Activated CD8-positive, alpha-beta T cell treated with anti-CD3 and anti-CD28 coated beads for 36 hours (primary cell): ENCODE measurements at regions of chr2 and their contacts with region 1.

Region 1: GRCh38 chr2:39124000-39124745 is 3.3 kb upstream of the SOS1 start:
- DNase-seq: peak; percentile 98
- ATAC-seq: peak; percentile 72
- H3K4me3 Mint-ChIP-seq: peak overlapping the region; percentile 91
- H3K27ac Mint-ChIP-seq: peak overlapping the region; percentile 94
- H3K4me1 Mint-ChIP-seq: peaks cover 45% of the 10 kb centered on the region
- H3K27me3 Mint-ChIP-seq: no peaks in the 10 kb centered on the region
- CTCF ChIP-seq: peak; percentile 59

Region 2: DNA sequence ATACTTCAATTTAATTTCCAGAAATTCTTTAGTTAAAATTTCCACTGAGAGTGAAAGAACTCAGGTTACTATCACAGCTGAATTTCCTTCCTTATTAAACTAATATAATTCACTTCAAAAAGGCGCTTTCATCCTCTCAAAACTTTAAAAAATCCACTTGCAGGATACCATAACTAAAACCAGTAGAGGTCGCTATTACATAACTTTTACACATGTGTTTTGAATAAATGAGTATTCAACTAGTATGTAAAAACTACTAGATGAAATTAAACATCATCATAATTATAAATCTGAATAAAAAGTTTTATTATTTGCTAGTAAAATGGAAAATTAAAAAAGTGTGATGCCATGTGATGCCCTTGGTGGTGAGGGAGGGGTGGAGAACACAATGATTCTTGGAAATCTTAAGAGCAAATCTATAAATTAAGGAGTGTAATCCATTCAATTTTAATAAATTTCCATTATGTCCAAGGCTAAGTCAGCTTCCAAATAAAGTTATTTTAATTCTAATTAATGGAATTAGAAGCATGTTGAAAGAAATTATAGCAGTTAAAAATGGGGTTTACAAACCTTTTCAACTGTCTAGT is 64.7 kb before region 1 on chr2:
- CTCF ChIA-PET with region 1: interaction called, 38 read pairs
- POLR2A ChIA-PET with region 1: interaction called, 3 read pairs
- intact Hi-C with region 1: loop called (anchors 5 kb)
- DNase-seq: no peak
- ATAC-seq: no peak
- H3K4me3 Mint-ChIP-seq: no peak overlapping the region
- H3K27ac Mint-ChIP-seq: no peak overlapping the region
- H3K4me1 Mint-ChIP-seq: peaks cover 12% of the 10 kb centered on the region
- H3K27me3 Mint-ChIP-seq: no peaks in the 10 kb centered on the region
- CTCF ChIP-seq: peak; percentile 82

Region 3: DNA sequence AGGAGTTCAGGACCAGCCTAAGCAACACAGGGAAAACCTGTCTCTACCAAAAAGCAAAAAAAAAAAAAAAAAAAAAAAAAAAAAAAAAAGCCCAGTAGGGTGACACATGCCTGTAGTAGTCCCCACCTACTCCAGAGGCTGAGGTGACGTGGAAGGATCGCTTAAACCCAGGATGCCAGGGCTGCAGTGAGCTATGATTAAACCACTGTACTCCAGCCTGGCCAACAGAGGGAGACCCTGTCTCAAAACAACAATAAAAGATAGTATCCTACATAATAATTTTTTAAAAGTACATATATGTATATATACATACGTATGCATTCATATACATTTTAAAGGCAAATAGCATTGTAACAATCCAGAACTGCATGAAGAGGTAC is 55.0 kb before region 1 on chr2:
- CTCF ChIA-PET with region 1: interaction called, 3 read pairs
- POLR2A ChIA-PET with region 1: no interaction called
- intact Hi-C with region 1: loop called (anchors 5 kb)
- DNase-seq: peak; percentile 33
- ATAC-seq: peak; percentile 75
- H3K4me3 Mint-ChIP-seq: no peak overlapping the region
- H3K27ac Mint-ChIP-seq: no peak overlapping the region
- H3K4me1 Mint-ChIP-seq: peaks cover 39% of the 10 kb centered on the region
- H3K27me3 Mint-ChIP-seq: no peaks in the 10 kb centered on the region
- CTCF ChIP-seq: no peak

Region 4: DNA sequence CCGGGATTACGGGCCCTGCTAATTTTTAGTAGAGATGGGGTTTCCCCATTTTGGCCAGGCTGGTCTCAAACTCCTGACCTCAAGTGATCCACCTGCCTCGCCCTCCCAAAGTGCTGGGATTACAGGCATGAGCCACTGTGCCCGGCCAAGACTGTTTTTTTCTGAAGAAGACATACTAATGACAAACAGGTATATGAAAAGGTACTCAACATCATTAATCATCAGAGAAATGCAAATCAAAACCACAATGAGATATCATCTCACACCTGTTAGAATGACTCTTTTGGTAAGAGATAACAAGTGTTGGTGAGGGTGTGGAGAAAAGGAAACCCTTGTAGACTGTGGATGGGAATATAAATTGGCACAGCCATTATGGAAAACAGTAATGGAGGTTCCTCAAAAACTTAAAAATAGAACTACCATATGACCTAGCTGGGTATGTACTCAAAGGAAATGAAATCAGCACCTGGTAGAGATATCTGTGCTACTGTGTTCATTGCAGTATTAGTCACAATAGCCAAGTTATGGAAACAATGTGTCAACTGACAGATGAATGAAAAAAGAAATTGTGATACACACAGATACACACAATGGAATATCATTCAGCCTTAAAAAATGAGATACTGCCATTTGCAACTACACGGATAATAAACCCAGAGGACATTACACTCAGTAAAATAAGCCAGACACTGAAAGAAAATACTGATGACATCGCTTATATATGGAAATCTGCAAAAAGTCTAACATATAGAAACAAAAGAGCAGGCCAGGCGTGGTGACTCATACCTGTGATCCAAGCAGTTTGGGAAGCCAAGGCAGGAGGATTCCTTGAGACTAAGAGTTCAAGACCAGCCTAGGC is 24.1 kb before region 1 on chr2:
- CTCF ChIA-PET with region 1: interaction called, 7 read pairs
- POLR2A ChIA-PET with region 1: interaction called, 11 read pairs
- intact Hi-C with region 1: no loop called
- DNase-seq: peak; percentile 25
- ATAC-seq: peak; percentile 92
- H3K4me3 Mint-ChIP-seq: no peak overlapping the region
- H3K27ac Mint-ChIP-seq: peak overlapping the region; percentile 91
- H3K4me1 Mint-ChIP-seq: peaks cover 63% of the 10 kb centered on the region
- H3K27me3 Mint-ChIP-seq: no peaks in the 10 kb centered on the region
- CTCF ChIP-seq: no peak

Region 5: GRCh38 chr2:39107719-39108273 is 16.4 kb before region 1 on chr2:
- CTCF ChIA-PET with region 1: interaction called, 19 read pairs
- POLR2A ChIA-PET with region 1: interaction called, 11 read pairs
- intact Hi-C with region 1: no loop called
- DNase-seq: no peak
- ATAC-seq: no peak
- H3K4me3 Mint-ChIP-seq: no peak overlapping the region
- H3K27ac Mint-ChIP-seq: peak overlapping the region; percentile 37
- H3K4me1 Mint-ChIP-seq: peaks cover 53% of the 10 kb centered on the region
- H3K27me3 Mint-ChIP-seq: no peaks in the 10 kb centered on the region
- CTCF ChIP-seq: no peak

Region 6: GRCh38 chr2:39216346-39217191 is 92.4 kb after region 1 on chr2:
- CTCF ChIA-PET with region 1: interaction called, 20 read pairs
- POLR2A ChIA-PET with region 1: interaction called, 29 read pairs
- intact Hi-C with region 1: loop called (anchors 1 kb)
- DNase-seq: peak; percentile 89
- ATAC-seq: peak; percentile 73
- H3K4me3 Mint-ChIP-seq: peak overlapping the region; percentile 47
- H3K27ac Mint-ChIP-seq: peak overlapping the region; percentile 94
- H3K4me1 Mint-ChIP-seq: peaks cover 63% of the 10 kb centered on the region
- H3K27me3 Mint-ChIP-seq: no peaks in the 10 kb centered on the region
- CTCF ChIP-seq: no peak